HEK293 (cell line): ENCODE measurements at regions of chr1 and their contacts with region 1.

Region 1: GRCh38 chr1:181142096-181142958 is 53.8 kb downstream of the IER5 start:
- H3K4me3 ChIP-seq: no peak overlapping the region
- H3K27ac ChIP-seq: no peak overlapping the region
- H3K4me1 ChIP-seq: no peaks in the 10 kb centered on the region
- CTCF ChIP-seq: peak; percentile 93

Region 2: DNA sequence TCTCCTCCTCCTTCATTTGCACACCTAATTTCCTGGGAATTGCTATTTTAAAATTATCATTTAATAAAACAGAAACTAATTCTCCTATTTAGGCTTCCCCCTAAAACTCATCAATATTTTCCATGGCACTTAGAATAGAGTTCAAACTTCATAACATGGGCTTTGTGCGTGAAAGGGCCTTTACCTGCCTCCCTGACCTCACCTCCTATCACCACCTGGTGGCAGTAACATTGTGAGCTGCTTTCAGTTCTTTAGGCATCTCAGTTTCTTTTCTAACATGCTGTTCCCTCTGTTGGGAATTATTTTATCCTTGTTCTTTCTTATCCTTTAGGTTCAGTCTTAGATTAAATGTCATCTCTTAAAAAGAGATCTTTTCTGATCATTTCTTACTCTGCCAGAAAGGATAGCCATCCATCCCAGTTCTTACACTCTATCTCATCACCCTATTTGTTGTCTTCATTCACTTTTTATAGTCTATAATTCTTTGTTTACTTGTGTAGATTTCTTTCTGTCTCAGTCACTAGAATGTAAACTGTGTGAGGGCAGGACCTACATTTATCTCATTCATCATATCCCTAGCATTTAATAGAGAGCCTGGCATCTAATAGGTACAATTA is 363.4 kb before region 1 on chr1:
- CTCF ChIA-PET with region 1: no interaction called
- POLR2A ChIA-PET with region 1: no interaction called
- H3K4me3 ChIP-seq: no peak overlapping the region
- H3K27ac ChIP-seq: no peak overlapping the region
- H3K4me1 ChIP-seq: no peaks in the 10 kb centered on the region
- CTCF ChIP-seq: no peak; the same call in 1 of the 2 replicates

Region 3: DNA sequence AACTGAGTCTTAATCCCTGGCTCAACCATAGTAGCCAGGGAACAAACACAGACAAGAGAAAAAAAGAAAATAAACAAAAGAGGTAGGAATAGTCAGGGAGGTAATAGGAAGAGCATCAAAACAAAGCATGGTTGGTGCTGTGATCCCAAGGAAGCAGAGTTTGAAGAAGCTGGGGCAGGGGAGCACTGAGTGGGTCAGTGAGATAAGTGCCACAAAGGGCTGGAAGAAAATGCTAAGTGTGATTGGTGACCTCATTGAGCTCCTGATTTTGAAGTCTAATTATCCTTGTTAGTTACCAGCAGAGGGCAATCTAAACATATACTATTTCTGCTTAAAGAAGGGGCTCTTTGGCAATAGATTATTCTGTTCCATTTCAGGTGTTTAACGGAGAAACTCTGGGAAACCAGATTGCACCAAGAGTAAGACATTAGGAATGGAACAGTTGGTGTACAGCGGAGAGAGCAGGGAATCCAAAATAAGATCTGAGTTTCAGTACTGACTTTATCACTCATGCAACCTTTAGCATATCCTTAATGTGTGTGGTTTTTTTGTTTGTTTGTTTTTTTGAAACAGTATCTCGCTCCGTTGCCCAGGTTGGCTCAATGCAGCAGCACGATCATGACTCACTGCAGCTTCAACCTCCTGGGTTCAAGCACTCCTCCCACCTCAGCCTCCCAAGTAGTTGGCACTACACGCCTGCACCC is 260.4 kb before region 1 on chr1:
- CTCF ChIA-PET with region 1: interaction called, 76 read pairs
- POLR2A ChIA-PET with region 1: interaction called, 5 read pairs
- H3K4me3 ChIP-seq: no peak overlapping the region
- H3K27ac ChIP-seq: no peak overlapping the region
- H3K4me1 ChIP-seq: peaks cover 5% of the 10 kb centered on the region; the same call in 1 of the 2 replicates
- CTCF ChIP-seq: no peak

Region 4: DNA sequence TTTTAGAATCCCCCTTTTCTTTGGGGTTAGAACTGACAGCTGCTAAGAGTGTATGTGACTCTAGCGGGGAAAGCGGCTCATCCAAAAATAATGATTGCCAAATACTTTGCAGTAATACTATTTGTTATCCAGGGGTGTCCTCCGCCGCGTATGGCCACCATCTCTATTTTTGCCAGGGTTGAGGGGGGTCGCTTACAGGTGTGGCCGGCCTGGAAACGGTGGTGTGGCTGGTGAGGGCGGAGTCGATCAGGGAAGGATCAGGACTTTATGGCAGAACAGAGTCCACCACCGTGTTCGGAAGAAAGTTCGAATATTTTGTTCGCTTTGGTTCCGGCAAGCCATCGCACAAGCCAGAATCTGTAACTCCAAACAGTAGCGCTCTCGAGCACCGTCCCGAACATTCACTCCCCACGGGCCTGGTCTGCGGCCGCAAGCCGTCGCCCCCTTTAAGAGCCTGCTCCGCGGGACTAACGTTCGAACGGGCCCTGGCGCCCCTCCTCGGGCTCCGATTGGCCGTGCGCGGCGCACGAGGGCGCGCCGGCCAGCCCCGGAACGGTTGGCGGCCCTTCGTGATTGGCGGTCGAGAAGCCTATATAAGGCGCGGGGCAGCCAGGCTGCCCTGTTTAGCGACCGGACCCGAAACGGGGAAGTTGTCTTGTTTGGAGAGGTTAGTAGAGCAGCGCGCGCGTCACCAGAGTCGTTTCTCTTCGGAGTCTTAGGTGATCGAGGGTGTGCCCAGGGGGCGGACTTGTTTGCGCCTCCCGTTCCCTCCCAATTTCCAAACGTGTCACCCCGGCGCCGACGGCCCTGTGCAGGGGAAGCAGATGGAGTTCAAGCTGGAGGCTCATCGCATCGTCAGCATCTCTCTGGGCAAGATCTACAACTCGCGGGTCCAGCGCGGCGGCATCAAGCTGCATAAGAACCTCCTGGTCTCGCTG is 54.0 kb before region 1 on chr1 and contains the start of gene IER5:
- CTCF ChIA-PET with region 1: interaction called, 67 read pairs
- POLR2A ChIA-PET with region 1: interaction called, 163 read pairs
- H3K4me3 ChIP-seq: peak within 1 kb of the TSS; percentile 96
- H3K27ac ChIP-seq: peak within 1 kb of the TSS; percentile 82
- H3K4me1 ChIP-seq: no peaks in the 10 kb centered on the region
- CTCF ChIP-seq: no peak

Region 5: DNA sequence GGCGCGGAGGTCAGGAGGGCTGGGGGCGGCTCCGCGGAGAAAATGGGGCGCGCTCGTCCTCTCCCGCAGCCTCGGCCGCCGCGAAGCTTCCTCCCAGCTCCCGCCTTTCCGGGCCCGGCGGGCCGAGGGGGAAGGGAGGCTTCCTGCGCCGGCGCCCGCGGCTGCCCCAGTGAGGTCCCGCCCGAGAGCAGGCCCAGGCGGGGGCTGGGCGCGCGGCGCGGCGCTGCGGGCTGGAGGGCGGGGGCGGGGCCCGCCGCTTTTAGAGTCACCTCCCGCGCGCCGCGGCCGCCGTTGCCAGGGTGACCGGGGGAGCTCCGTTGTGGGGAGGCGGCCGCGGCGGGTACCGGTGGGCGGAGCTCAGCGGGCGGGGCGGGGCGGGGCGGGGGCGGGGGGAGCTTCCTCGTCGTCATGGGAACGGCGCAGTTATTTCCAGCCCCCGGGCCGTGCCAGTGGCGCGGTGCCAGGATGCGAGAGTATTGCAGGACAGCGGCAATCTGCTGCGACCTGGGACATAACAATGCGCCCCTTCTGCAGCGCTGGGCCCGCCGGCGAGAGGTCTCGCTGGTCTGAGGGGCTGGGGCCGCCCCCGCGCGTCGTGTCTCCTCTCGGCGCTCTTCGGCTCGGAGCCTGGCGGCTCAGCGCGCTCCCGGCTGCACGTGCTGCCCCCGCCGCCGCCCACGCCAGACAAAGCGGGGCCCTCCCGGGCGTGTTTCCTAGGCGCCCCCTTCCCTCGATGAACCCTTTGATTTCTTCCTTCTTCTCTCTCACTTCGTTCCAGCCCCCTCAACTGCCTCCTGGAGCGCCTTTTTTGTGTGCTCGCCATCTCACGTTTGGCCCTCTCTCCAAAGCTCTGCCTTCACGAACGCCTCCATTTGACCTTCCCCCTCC is 36.9 kb before region 1 on chr1:
- CTCF ChIA-PET with region 1: interaction called, 69 read pairs
- POLR2A ChIA-PET with region 1: interaction called, 12 read pairs
- H3K4me3 ChIP-seq: peak overlapping the region; percentile 57
- H3K27ac ChIP-seq: peak overlapping the region; percentile 89
- H3K4me1 ChIP-seq: peaks cover 31% of the 10 kb centered on the region; the same call in 1 of the 2 replicates
- CTCF ChIP-seq: 0 out of 2 replicates have a peak, but pooled peaks have one; percentile 11

Region 6: GRCh38 chr1:181128592-181129497 is 13.5 kb before region 1 on chr1:
- CTCF ChIA-PET with region 1: interaction called, 12 read pairs
- POLR2A ChIA-PET with region 1: interaction called, 3 read pairs
- H3K4me3 ChIP-seq: no peak overlapping the region
- H3K27ac ChIP-seq: no peak overlapping the region
- H3K4me1 ChIP-seq: peaks cover 3% of the 10 kb centered on the region; the same call in 1 of the 2 replicates
- CTCF ChIP-seq: no peak

Region 7: GRCh38 chr1:181166377-181167196 is 24.3 kb after region 1 on chr1:
- CTCF ChIA-PET with region 1: interaction called, 10 read pairs
- POLR2A ChIA-PET with region 1: no interaction called
- H3K4me3 ChIP-seq: no peak overlapping the region
- H3K27ac ChIP-seq: no peak overlapping the region
- H3K4me1 ChIP-seq: no peaks in the 10 kb centered on the region
- CTCF ChIP-seq: peak; percentile 32; the same call in 1 of the 2 replicates